Aorta (tissue), 5 donors: ENCODE measurements at regions of chr2 and their contacts with region 1.

Region 1: GRCh38 chr2:164737612-164738081 is 104.0 kb downstream of the COBLL1 start:
- DNase-seq: peak in 1 of 2 donors; percentile 55
- ATAC-seq: peak; percentile 87
- H3K4me3 ChIP-seq: peak overlapping the region in 1 of 2 donors; percentile 26
- H3K27ac ChIP-seq: no peak overlapping the region
- H3K4me1 ChIP-seq: peaks cover 0 to 4% of the 10 kb centered on the region in 2 donors
- H3K27me3 ChIP-seq: no peaks in the 10 kb centered on the region

Region 2: DNA sequence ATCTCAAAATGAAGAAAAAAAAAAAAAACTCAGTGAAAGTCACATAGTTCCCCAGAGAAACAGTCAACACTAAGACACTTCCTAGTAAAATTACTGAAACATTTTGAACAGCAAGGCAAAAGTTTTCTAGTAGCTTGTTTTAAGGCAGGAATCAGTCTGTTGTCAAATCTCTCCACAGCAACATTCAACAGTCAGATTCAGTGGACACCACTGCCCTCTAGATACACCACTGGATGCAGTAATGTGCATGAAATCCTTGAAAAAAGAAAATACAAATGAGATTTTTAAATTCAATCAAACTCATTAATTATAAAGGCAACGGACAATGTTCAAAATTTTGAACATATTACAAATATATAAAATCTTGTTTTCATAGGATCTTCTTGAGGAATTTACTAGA is 162.7 kb before region 1 on chr2:
- intact Hi-C with region 1: no loop called
- DNase-seq: no peak
- ATAC-seq: no peak
- H3K4me3 ChIP-seq: no peak overlapping the region
- H3K27ac ChIP-seq: no peak overlapping the region
- H3K4me1 ChIP-seq: no peaks in the 10 kb centered on the region
- H3K27me3 ChIP-seq: no peaks in the 10 kb centered on the region

Region 3: DNA sequence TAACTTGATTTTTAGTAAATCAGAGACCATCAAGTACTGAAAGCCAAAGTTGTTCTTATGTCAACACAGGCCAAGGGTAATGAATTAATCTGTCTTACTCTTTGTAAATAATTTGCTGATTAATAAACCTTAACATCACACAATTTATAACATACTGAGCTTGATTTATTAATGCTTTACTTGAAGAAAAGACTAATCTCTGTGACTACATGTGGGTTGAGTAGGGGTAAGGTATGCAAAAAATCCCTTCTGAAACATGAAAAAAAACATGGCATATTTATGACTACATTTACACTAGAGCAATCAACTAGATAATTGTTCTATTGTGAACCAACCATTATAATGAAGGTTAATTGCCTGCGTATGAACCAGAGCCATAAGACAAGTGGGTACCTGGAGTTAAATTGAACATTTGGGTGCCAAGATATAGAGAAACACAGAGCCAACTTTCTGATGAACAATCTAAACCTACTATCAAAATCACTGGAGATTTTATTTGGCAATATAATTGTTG is 48.7 kb before region 1 on chr2:
- intact Hi-C with region 1: no loop called
- DNase-seq: no peak
- ATAC-seq: no peak
- H3K4me3 ChIP-seq: no peak overlapping the region
- H3K27ac ChIP-seq: no peak overlapping the region
- H3K4me1 ChIP-seq: peaks cover 0 to 4% of the 10 kb centered on the region in 2 donors
- H3K27me3 ChIP-seq: no peaks in the 10 kb centered on the region

Region 4: DNA sequence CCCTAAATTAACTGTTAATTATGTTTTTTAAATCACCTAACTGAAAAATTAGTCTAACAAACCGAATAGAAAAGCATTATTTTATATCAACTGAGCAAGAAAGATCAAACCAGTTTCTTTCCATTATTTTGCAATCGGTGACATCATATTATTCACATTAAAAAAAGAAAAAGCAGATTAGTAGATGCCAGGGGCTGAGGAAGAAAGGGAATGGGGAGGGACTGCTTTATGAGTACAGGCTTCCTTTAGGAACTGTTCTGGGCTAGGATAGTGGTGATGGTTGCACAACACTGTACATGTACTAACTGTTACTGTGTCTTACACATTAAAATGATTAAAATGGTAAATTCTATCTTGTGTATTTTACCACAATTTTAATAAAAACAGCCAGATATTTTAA is 44.7 kb after region 1 on chr2:
- intact Hi-C with region 1: loop called in 1 of 2 experiments (anchors 1 kb)
- DNase-seq: no peak
- ATAC-seq: peak; percentile 85
- H3K4me3 ChIP-seq: no peak overlapping the region
- H3K27ac ChIP-seq: peak overlapping the region in 1 of 2 donors; percentile 51
- H3K4me1 ChIP-seq: peaks cover 7 to 11% of the 10 kb centered on the region in 2 donors
- H3K27me3 ChIP-seq: no peaks in the 10 kb centered on the region

Region 5: GRCh38 chr2:164847981-164848741 is 110.5 kb after region 1 on chr2:
- intact Hi-C with region 1: no loop called
- DNase-seq: no peak
- ATAC-seq: no peak
- H3K4me3 ChIP-seq: no peak overlapping the region
- H3K27ac ChIP-seq: no peak overlapping the region
- H3K4me1 ChIP-seq: no peaks in the 10 kb centered on the region
- H3K27me3 ChIP-seq: no peaks in the 10 kb centered on the region

Region 6: GRCh38 chr2:164910101-164910899 is 172.7 kb after region 1 on chr2:
- intact Hi-C with region 1: loop called in 1 of 2 experiments (anchors 2 kb)
- DNase-seq: no peak
- ATAC-seq: peak; percentile 44
- H3K4me3 ChIP-seq: no peak overlapping the region
- H3K27ac ChIP-seq: peak overlapping the region; percentile 8 to 76
- H3K4me1 ChIP-seq: peaks cover 0 to 2% of the 10 kb centered on the region in 2 donors
- H3K27me3 ChIP-seq: no peaks in the 10 kb centered on the region

Region 7: GRCh38 chr2:164917296-164917903 is 179.8 kb after region 1 on chr2:
- intact Hi-C with region 1: loop called (anchors 2 kb)
- DNase-seq: peak; percentile 42 to 47
- ATAC-seq: no peak
- H3K4me3 ChIP-seq: no peak overlapping the region
- H3K27ac ChIP-seq: no peak overlapping the region
- H3K4me1 ChIP-seq: no peaks in the 10 kb centered on the region
- H3K27me3 ChIP-seq: no peaks in the 10 kb centered on the region